ENCODE measurements at regions of chr13 and their contacts with region 1.

Region 1: GRCh38 chr13:100235311-100235901 is 146.5 kb downstream of the PCCA start:
- DNase-seq: peak; percentile 42
- CTCF ChIP-seq: peak; percentile 33

Region 2: DNA sequence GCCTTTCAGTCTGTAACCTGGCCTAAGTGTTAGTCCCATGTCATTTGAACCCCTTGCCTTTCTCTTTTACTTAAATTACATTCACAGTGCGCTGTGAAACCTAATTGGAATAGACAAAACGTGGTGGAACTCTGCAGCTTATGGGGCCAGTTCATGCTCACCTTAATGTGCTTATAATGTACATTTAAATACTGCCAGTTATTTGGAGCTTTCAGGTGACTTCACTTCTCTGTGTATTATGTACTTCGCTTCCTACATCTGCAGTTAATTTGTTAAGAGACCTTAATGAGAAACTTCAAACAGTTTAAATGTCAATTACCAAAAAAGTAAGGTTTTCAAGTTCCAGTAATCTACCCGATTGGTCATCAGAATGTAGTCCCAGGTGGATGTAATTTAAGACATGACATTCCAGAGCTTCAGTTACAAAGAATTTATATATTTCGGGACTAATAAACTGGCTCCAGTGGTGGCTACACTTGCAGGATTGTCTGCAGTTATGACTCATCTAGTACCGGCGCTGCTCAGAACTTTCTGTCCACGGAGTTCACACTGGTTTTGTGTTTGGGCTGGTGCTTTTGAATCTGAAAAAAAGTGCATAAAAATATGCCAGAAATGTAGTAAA is 608.8 kb before region 1 on chr13:
- in situ Hi-C with region 1: loop called (anchors 25 kb)
- DNase-seq: no peak
- CTCF ChIP-seq: no peak

Measured in GM13976 (cell line).